PC-9 (cell line): ENCODE measurements at regions of chr1 and their contacts with region 1.

Region 1: GRCh38 chr1:94713472-94714141 is 106.5 kb upstream of the SLC44A3 start:
- DNase-seq: peak; percentile 86 to 99
- H3K4me3 ChIP-seq: 0 out of 2 replicates have a peak overlapping the region, but pooled peaks have one; percentile 9
- H3K27ac ChIP-seq: peak overlapping the region; percentile 79
- H3K4me1 ChIP-seq: peaks cover 23% of the 10 kb centered on the region
- H3K27me3 ChIP-seq: no peaks in the 10 kb centered on the region
- CTCF ChIP-seq: no peak

Region 2: GRCh38 chr1:93395195-93395594 is 1318.4 kb before region 1 on chr1:
- CTCF ChIA-PET with region 1: no interaction called
- POLR2A ChIA-PET with region 1: no interaction called
- intact Hi-C with region 1: no loop called
- DNase-seq: no peak
- H3K4me3 ChIP-seq: no peak overlapping the region
- H3K27ac ChIP-seq: no peak overlapping the region
- H3K4me1 ChIP-seq: peaks cover 9% of the 10 kb centered on the region
- H3K27me3 ChIP-seq: no peaks in the 10 kb centered on the region
- CTCF ChIP-seq: no peak

Region 3: DNA sequence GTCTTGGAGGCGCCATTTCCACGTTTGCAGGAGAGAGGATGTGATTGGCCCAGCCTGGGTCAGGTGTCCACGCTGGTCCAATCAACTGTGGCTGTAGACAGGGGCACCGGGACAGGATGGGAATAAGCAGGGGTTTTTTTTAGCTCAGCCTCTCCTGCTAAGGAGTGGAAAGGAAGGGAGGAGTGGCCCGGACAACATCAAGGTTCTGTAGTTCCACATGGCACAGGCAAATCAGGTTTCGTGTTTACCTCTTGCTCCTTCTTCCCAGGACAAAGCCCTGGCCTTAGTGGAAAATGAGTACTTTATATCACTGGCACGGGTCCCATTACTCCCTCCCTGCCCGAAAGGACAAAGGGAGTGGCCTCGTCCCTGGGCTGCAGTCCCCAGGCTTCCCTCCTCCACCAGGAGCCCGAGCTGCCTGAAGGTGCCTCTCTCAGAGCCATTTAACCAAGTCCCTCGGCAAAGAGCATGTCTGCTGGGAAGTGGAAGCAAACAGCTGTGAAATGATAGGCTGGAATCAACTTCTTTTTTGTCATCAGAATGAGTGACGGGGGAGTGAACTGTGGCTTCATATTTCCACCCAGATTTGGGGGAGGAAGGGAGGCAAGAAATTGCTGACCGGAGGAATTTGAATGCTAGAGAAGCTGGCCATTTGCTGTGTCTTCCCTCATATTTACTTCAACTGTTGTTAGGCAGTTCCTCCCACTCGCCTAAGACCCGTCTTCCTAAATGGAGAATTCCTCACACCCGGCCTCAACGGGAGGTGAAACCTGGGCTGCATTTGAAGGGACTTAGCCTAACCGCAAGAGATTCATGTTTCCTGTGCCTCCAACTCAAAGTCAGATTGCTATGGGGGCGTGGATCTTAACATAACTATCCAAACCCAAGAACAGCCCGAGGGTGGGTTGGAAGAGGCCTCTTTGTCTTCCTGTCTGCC is 21.6 kb after region 1 on chr1:
- CTCF ChIA-PET with region 1: no interaction called
- POLR2A ChIA-PET with region 1: no interaction called
- intact Hi-C with region 1: loop called (anchors 1 kb)
- DNase-seq: no peak
- H3K4me3 ChIP-seq: no peak overlapping the region
- H3K27ac ChIP-seq: no peak overlapping the region
- H3K4me1 ChIP-seq: peaks cover 23% of the 10 kb centered on the region
- H3K27me3 ChIP-seq: no peaks in the 10 kb centered on the region
- CTCF ChIP-seq: no peak

Region 4: GRCh38 chr1:94746635-94747525 is 33.3 kb after region 1 on chr1:
- CTCF ChIA-PET with region 1: no interaction called
- POLR2A ChIA-PET with region 1: no interaction called
- intact Hi-C with region 1: loop called (anchors 2 kb)
- DNase-seq: no peak
- H3K4me3 ChIP-seq: no peak overlapping the region
- H3K27ac ChIP-seq: no peak overlapping the region
- H3K4me1 ChIP-seq: no peaks in the 10 kb centered on the region
- H3K27me3 ChIP-seq: no peaks in the 10 kb centered on the region
- CTCF ChIP-seq: no peak

Region 5: DNA sequence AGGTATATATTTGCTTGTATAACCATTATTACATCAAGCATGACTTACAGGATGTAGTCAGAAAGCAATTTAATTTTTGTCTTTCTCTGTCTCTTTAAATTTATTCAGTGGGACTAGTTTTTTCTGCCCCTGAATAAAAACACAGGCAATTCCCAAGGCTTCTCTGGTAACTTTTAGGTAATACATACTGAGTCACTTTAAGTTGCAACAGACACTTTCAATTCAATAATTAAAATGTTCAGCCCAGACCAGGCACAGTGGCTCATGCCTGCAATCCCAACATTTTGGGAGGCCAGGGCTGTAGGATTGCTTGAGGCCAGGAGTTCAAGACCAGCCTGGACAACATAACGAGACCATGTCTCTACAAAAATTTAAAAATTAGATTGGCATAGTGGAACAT is 118.8 kb after region 1 on chr1:
- CTCF ChIA-PET with region 1: no interaction called
- POLR2A ChIA-PET with region 1: no interaction called
- intact Hi-C with region 1: no loop called
- DNase-seq: no peak
- H3K4me3 ChIP-seq: no peak overlapping the region
- H3K27ac ChIP-seq: no peak overlapping the region
- H3K4me1 ChIP-seq: no peaks in the 10 kb centered on the region
- H3K27me3 ChIP-seq: no peaks in the 10 kb centered on the region
- CTCF ChIP-seq: no peak